Caco-2 (cell line): ENCODE measurements at regions of chr11 and their contacts with region 1.

Region 1: GRCh38 chr11:64185816-64186498 is at the start of gene STIP1:
- DNase-seq: peak; percentile 99 to 100
- H3K4me3 ChIP-seq: peak within 1 kb of the TSS; percentile 55
- H3K4me3 Mint-ChIP-seq: no peak within 1 kb of the TSS
- H3K27ac Mint-ChIP-seq: no peak within 1 kb of the TSS
- H3K4me1 ChIP-seq: peaks cover 16% of the 10 kb centered on the region
- H3K4me1 Mint-ChIP-seq: peaks cover 12% of the 10 kb centered on the region
- H3K27me3 ChIP-seq: no peaks in the 10 kb centered on the region
- H3K27me3 Mint-ChIP-seq: no peaks in the 10 kb centered on the region
- CTCF ChIP-seq: peak in 1 of 2 experiments; percentile 60
- total RNA-seq, gene STIP1: 293 and 297 TPM in 2 replicates

Region 2: GRCh38 chr11:64165849-64166635 is 19.9 kb before region 1 on chr11 and contains the start of gene MACROD1:
- CTCF ChIA-PET with region 1: interaction called, 19 read pairs
- POLR2A ChIA-PET with region 1: interaction called, 33 read pairs
- intact Hi-C with region 1: loop called (anchors 1 kb)
- DNase-seq: peak; percentile 98
- H3K4me3 ChIP-seq: peak within 1 kb of the TSS; percentile 77
- H3K4me3 Mint-ChIP-seq: peak within 1 kb of the TSS; percentile 78
- H3K27ac Mint-ChIP-seq: peak within 1 kb of the TSS; percentile 89
- H3K4me1 ChIP-seq: peaks cover 12% of the 10 kb centered on the region; the same call in 1 of the 2 replicates
- H3K4me1 Mint-ChIP-seq: peaks cover 13% of the 10 kb centered on the region
- H3K27me3 ChIP-seq: no peaks in the 10 kb centered on the region
- H3K27me3 Mint-ChIP-seq: no peaks in the 10 kb centered on the region
- CTCF ChIP-seq: no peak
- total RNA-seq, gene MACROD1: 24.0 and 29.6 TPM in 2 replicates

Region 3: GRCh38 chr11:64196626-64197025 is 10.7 kb after region 1 on chr11:
- CTCF ChIA-PET with region 1: interaction called, 14 read pairs
- POLR2A ChIA-PET with region 1: interaction called, 3 read pairs
- intact Hi-C with region 1: no loop called
- DNase-seq: no peak
- H3K4me3 ChIP-seq: no peak overlapping the region
- H3K4me3 Mint-ChIP-seq: no peak overlapping the region
- H3K27ac Mint-ChIP-seq: no peak overlapping the region
- H3K4me1 ChIP-seq: no peaks in the 10 kb centered on the region
- H3K4me1 Mint-ChIP-seq: no peaks in the 10 kb centered on the region
- H3K27me3 ChIP-seq: no peaks in the 10 kb centered on the region
- H3K27me3 Mint-ChIP-seq: no peaks in the 10 kb centered on the region
- CTCF ChIP-seq: no peak

Region 4: GRCh38 chr11:64240394-64241174 is 54.6 kb after region 1 on chr11 and contains the start of gene FKBP2:
- CTCF ChIA-PET with region 1: interaction called, 3 read pairs
- POLR2A ChIA-PET with region 1: interaction called, 9 read pairs
- intact Hi-C with region 1: loop called (anchors 1 kb)
- DNase-seq: peak; percentile 97 to 99
- H3K4me3 ChIP-seq: peak within 1 kb of the TSS; percentile 95
- H3K4me3 Mint-ChIP-seq: peak within 1 kb of the TSS; percentile 88
- H3K27ac Mint-ChIP-seq: peak within 1 kb of the TSS; percentile 90
- H3K4me1 ChIP-seq: peaks cover 20% of the 10 kb centered on the region
- H3K4me1 Mint-ChIP-seq: peaks cover 15% of the 10 kb centered on the region
- H3K27me3 ChIP-seq: no peaks in the 10 kb centered on the region
- H3K27me3 Mint-ChIP-seq: no peaks in the 10 kb centered on the region
- CTCF ChIP-seq: no peak
- total RNA-seq, gene FKBP2: 70.2 and 76.8 TPM in 2 replicates

Region 5: GRCh38 chr11:64269380-64270234 is 83.7 kb after region 1 on chr11:
- CTCF ChIA-PET with region 1: interaction called, 7 read pairs
- POLR2A ChIA-PET with region 1: interaction called, 4 read pairs
- intact Hi-C with region 1: loop called (anchors 5 kb)
- DNase-seq: peak; percentile 99
- H3K4me3 ChIP-seq: peak overlapping the region; percentile 85
- H3K4me3 Mint-ChIP-seq: peak overlapping the region; percentile 89
- H3K27ac Mint-ChIP-seq: peak overlapping the region; percentile 95
- H3K4me1 ChIP-seq: peaks cover 21% of the 10 kb centered on the region
- H3K4me1 Mint-ChIP-seq: peaks cover 17% of the 10 kb centered on the region
- H3K27me3 ChIP-seq: no peaks in the 10 kb centered on the region
- H3K27me3 Mint-ChIP-seq: no peaks in the 10 kb centered on the region
- CTCF ChIP-seq: no peak

Region 6: GRCh38 chr11:64304316-64305072 is 118.5 kb after region 1 on chr11:
- CTCF ChIA-PET with region 1: interaction called, 6 read pairs
- POLR2A ChIA-PET with region 1: interaction called, 11 read pairs
- intact Hi-C with region 1: no loop called
- DNase-seq: peak; percentile 93 to 95
- H3K4me3 ChIP-seq: peak overlapping the region; percentile 65
- H3K4me3 Mint-ChIP-seq: peak overlapping the region; percentile 97
- H3K27ac Mint-ChIP-seq: peak overlapping the region; percentile 99
- H3K4me1 ChIP-seq: peaks cover 28% of the 10 kb centered on the region
- H3K4me1 Mint-ChIP-seq: peaks cover 9% of the 10 kb centered on the region
- H3K27me3 ChIP-seq: no peaks in the 10 kb centered on the region
- H3K27me3 Mint-ChIP-seq: no peaks in the 10 kb centered on the region
- CTCF ChIP-seq: peak; percentile 87 to 97